Mammary epithelial cell (primary cell): ENCODE measurements at regions of chr2 and their contacts with region 1.

Region 1: DNA sequence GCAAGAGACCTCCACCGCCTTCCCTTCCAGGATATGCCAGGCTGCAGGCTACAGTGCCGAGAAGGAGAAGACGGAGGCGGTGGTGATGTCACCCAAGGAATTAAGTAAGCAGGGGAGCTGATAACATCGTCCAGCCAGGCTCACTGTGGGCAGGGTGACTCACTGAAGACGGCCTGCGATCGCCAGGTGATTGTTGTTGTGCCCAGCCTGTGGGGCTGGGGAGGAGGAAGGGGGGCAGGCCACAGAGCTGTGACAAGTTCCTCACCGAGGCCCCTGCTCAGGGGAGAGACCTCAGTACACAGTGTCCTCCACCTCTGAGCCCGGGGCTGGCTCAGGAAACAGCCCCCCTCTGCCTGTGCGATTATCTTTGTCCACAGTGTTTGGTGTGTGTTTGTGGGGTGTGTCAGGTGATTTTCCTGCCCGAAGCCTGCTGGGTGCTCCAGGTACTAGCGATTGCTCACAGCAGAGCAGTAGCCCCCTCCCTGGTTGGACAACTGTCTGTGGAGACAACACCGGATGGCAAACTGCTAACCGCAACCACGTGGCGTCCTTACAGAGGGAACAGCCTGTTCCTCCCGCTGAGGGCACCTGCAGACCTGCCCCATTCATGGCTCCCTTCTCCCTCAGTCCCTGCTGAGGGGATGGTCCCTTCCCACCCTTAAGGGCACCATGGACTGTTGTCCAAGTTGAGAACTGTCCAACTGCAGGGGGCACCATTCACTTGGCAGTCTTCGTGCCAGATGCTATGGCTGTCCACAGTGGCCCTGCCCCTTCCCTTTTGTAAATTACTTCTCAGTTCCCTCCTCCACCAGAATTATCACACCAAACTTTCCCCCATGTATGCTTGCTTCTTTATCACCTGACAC is 95.1 kb downstream of the ZFP36L2 start:
- DNase-seq: peak; percentile 99
- H3K4me3 ChIP-seq: no peak overlapping the region
- H3K27ac ChIP-seq: peak overlapping the region; percentile 89
- H3K4me1 ChIP-seq: peaks cover 33% of the 10 kb centered on the region
- H3K27me3 ChIP-seq: no peaks in the 10 kb centered on the region
- CTCF ChIP-seq: peak; percentile 34 to 53

Region 2: DNA sequence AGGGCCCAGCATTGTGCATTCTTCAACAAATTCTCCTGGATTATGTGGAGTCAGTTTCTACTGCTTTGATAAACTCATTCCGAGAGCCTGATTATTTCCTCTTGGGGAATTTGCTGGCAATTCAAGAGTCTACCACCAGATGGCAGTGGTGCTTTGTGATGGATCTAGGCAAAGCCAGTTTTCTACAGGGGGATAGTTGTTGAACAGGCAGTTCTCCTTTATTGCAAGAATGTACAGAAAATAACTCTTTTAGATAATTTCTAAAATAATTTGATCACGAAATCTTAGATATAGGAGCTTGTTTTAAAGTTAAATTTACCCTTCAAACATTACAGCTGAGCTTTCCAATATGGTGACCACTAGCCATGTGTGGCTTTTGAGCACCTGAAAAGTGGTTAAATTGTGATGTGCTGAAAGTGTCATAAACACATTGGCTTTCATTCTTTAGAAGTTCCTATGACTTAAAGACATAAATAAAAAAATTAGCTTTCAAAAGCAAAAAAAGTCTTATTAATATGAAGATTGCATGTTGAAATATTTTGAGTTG is 272.2 kb before region 1 on chr2:
- CTCF ChIA-PET with region 1: no interaction called
- dilution Hi-C with region 1: no loop called
- in situ Hi-C with region 1: no loop called
- intact Hi-C with region 1: loop called (anchors 10 kb)
- DNase-seq: peak; percentile 63
- H3K4me3 ChIP-seq: no peak overlapping the region
- H3K27ac ChIP-seq: no peak overlapping the region
- H3K4me1 ChIP-seq: peaks cover 35% of the 10 kb centered on the region
- H3K27me3 ChIP-seq: no peaks in the 10 kb centered on the region
- CTCF ChIP-seq: peak; percentile 93 to 95

Region 3: DNA sequence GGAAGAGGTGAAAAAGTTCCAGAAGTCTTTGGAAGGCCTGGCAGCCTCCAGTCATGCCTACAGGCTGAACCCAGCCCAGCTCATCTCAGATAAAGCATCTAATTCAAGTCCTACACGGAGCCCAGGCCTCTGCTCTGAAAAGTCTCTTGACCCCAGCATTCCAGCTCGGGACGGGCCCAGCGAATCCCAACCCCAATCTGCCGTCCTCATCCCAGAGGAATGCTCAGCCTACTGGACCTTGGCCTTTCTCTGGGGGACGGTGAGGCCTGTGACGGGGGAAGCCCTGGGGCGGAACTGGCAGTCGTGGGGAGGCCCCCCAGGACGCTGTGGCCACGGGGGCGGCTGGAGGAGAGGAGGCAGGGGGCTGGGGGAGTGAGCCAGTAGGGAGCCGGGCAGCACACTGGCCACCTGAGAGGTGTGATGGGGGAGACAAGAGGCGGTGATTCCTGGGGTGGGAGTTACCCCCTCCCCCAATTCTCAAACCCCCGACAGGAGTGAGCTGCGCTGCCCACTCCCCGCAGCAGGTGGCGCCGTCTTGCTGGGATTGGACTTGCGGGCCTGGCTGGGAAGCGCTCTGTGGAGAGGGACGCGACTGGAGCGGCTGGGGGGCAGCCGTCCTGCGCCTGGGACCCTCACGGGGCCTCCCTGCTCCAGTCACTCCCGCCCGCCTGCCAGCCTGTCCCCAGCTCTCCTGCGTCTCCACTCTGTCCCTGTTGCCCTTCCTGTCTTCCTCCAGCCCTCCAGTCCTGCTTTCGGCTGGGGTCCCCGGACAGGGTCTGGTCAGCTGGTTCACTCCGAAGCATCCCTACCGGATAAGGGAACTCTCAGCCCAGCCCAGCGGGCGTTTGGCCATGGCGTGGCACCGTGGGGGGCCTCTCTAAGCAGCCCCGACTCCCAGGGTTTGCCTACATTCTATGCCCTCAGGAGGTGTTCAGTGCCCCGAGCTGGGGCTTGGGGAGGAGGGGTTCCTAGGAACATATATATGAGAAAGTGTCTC is 156.2 kb before region 1 on chr2:
- CTCF ChIA-PET with region 1: no interaction called
- dilution Hi-C with region 1: no loop called
- in situ Hi-C with region 1: no loop called
- intact Hi-C with region 1: loop called (anchors 1 kb)
- DNase-seq: no peak
- H3K4me3 ChIP-seq: no peak overlapping the region
- H3K27ac ChIP-seq: peak overlapping the region; percentile 11
- H3K4me1 ChIP-seq: peaks cover 46% of the 10 kb centered on the region
- H3K27me3 ChIP-seq: no peaks in the 10 kb centered on the region
- CTCF ChIP-seq: peak; percentile 80 to 92

Region 4: DNA sequence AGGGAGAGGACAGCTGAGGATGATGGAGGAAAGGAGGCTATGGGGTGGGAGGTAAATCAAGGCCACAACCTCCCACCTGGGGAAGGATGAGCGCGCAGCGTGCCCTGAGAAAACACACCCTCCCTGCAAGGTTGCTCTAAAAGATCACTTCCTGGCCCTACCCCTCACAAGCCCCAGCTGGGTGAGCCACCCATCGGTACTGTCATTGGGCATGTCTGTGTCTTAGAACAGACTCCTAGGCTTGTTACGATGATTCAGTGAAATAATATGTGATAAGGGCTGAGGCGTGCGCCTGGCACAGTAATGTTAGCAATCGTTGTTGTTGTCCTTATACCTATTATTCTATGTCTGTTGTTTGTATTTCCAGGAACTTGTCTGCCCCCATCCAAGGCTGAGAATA is 79.9 kb before region 1 on chr2:
- CTCF ChIA-PET with region 1: no interaction called
- dilution Hi-C with region 1: no loop called
- in situ Hi-C with region 1: no loop called
- intact Hi-C with region 1: loop called (anchors 1 kb)
- DNase-seq: peak; percentile 89
- H3K4me3 ChIP-seq: no peak overlapping the region
- H3K27ac ChIP-seq: peak overlapping the region; percentile 85
- H3K4me1 ChIP-seq: peaks cover 36% of the 10 kb centered on the region
- H3K27me3 ChIP-seq: no peaks in the 10 kb centered on the region
- CTCF ChIP-seq: no peak

Region 5: GRCh38 chr2:43158259-43158880 is 27.1 kb after region 1 on chr2:
- CTCF ChIA-PET with region 1: no interaction called
- dilution Hi-C with region 1: no loop called
- in situ Hi-C with region 1: no loop called
- intact Hi-C with region 1: loop called (anchors 1 kb)
- DNase-seq: peak; percentile 94
- H3K4me3 ChIP-seq: no peak overlapping the region
- H3K27ac ChIP-seq: peak overlapping the region; percentile 93
- H3K4me1 ChIP-seq: peaks cover 52% of the 10 kb centered on the region
- H3K27me3 ChIP-seq: no peaks in the 10 kb centered on the region
- CTCF ChIP-seq: no peak

Region 6: DNA sequence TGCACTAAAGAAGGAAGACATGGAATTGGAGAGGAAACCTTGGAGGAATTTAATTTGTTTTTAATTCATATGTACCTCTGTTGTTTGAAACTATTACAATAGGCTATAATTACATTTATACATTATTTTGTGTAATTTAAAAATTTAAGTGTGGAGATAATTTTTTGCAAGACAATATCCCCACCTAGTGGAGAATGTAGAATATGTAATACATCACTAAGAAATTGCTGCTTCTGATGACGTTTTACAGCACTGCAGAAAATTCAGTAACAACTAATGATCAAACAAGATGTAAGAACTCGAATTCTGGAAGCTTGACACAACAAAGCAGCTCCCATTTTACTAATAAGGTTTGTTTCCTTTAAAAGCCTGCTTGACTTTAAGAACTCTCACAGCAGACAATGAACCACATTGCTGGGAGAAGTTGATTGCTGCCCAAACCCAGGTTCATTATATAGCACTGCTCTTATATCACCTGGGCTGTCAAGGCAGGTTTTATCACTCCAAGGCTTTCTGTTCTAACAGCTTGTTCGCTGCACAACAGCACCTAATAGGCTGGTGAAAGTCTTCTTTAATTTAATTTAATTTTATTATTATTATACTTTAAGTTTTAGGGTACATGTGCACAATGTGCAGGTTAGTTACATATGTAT is 411.2 kb after region 1 on chr2:
- CTCF ChIA-PET with region 1: no interaction called
- dilution Hi-C with region 1: no loop called
- in situ Hi-C with region 1: no loop called
- intact Hi-C with region 1: loop called (anchors 5 kb)
- DNase-seq: peak; percentile 23
- H3K4me3 ChIP-seq: no peak overlapping the region
- H3K27ac ChIP-seq: no peak overlapping the region
- H3K4me1 ChIP-seq: peaks cover 30% of the 10 kb centered on the region
- H3K27me3 ChIP-seq: no peaks in the 10 kb centered on the region
- CTCF ChIP-seq: peak; percentile 40